Activated naive CD4-positive, alpha-beta T cell treated with anti-CD3 and anti-CD28 coated beads for 36 hours (primary cell): ENCODE measurements at regions of chr2 and their contacts with region 1.

Region 1: GRCh38 chr2:237421542-237422116 is 7.7 kb upstream of the COL6A3 start:
- DNase-seq: peak; percentile 88
- H3K4me3 Mint-ChIP-seq: peak overlapping the region; percentile 25
- H3K27ac Mint-ChIP-seq: no peak overlapping the region
- H3K4me1 Mint-ChIP-seq: peaks cover 29% of the 10 kb centered on the region
- H3K27me3 Mint-ChIP-seq: peaks cover 11% of the 10 kb centered on the region

Region 2: GRCh38 chr2:236956038-236956618 is 465.5 kb before region 1 on chr2:
- CTCF ChIA-PET with region 1: no interaction called
- intact Hi-C with region 1: no loop called
- DNase-seq: no peak
- H3K4me3 Mint-ChIP-seq: no peak overlapping the region
- H3K27ac Mint-ChIP-seq: no peak overlapping the region
- H3K4me1 Mint-ChIP-seq: no peaks in the 10 kb centered on the region
- H3K27me3 Mint-ChIP-seq: no peaks in the 10 kb centered on the region

Region 3: GRCh38 chr2:237403024-237403882 is 18.4 kb before region 1 on chr2:
- CTCF ChIA-PET with region 1: interaction called, 10 read pairs
- intact Hi-C with region 1: no loop called
- DNase-seq: no peak
- H3K4me3 Mint-ChIP-seq: no peak overlapping the region
- H3K27ac Mint-ChIP-seq: no peak overlapping the region
- H3K4me1 Mint-ChIP-seq: no peaks in the 10 kb centered on the region
- H3K27me3 Mint-ChIP-seq: no peaks in the 10 kb centered on the region

Region 4: DNA sequence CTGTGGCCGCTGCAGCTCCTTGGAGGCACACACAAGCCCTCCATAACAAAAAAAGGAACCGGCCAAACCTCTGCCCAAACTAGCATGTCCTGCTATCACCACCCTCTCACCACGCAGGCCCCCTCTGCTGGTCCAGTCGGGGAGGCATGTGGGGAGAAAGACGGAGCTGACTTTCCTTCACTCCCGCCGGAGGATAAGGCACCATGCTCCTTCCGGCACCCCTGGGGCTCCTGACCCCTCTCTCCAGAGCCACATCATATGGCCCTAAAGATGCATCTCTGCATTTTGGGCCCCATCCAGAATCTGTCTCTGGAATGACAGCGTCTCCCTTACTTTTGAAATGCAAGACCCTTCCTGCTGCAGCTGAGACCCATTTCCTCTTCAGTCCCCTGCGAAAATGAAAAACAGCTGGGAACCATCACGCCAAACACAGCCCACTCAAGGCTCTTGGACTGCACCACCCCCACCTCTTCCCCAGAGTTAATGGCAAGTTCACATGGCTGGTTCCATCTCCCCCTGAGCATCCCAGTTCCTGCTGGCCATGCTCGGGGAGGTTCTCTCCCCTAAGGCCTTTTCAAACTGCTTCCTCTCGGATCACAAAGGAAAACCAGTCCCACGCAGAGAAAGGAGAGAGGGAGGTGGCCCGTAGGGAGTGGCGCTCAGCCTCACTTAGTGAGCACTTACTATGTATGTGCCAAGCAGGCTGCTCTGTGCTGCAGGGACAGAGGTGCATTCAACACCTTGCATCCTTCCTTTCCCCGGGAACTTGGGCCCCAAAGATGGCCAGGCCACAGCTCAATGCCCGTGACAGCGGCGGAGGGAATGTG is 30.2 kb after region 1 on chr2:
- CTCF ChIA-PET with region 1: interaction called, 21 read pairs
- intact Hi-C with region 1: no loop called
- DNase-seq: no peak
- H3K4me3 Mint-ChIP-seq: no peak overlapping the region
- H3K27ac Mint-ChIP-seq: no peak overlapping the region
- H3K4me1 Mint-ChIP-seq: peaks cover 9% of the 10 kb centered on the region
- H3K27me3 Mint-ChIP-seq: no peaks in the 10 kb centered on the region

Region 5: GRCh38 chr2:237540823-237541222 is 119.2 kb after region 1 on chr2:
- CTCF ChIA-PET with region 1: no interaction called
- intact Hi-C with region 1: no loop called
- DNase-seq: no peak
- H3K4me3 Mint-ChIP-seq: no peak overlapping the region
- H3K27ac Mint-ChIP-seq: no peak overlapping the region
- H3K4me1 Mint-ChIP-seq: no peaks in the 10 kb centered on the region
- H3K27me3 Mint-ChIP-seq: no peaks in the 10 kb centered on the region